IMR-90 (cell line): ENCODE measurements at regions of chr12 and their contacts with region 1.

Region 1: DNA sequence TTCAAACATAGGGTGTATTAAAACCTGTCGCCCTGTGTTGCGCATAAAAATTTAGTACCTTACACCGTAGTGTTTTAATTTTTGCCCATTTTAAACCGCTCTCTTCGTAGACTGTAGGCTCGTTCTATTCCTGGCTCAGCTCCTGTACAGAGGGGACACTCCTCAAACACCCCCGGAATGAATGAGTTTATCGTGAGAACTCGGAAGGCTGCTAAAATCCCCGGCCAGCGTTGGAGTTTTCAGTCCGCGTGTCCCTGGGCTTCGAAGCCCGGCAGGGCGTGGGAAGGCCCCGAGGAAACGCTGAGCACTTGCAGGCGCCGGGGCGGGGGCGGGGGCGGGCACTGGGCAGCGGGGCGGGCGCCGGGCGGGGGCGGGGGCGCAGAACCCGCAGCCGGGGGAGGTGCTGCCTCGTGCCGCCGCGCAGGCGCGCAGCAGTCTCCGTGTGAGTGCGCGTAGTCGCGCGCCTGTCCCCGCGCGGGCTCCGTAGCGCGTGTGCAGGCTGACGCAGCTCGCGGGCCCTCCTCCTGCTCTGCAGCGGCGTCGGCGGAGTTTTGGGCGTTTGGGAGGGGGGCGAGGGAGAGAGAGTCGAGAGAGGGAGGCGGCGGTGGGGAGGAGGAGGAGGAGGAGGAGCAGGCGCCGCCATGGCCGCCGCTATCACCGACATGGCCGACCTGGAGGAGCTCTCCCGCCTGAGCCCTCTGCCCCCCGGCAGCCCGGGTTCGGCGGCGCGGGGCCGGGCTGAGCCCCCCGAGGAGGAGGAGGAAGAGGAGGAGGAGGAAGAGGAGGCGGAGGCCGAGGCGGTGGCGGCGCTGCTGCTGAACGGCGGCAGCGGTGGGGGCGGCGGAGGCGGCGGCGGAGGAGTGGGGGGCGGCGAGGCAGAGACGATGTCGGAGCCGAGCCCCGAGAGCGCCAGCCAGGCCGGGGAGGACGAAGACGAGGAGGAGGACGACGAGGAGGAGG is at the start of gene AEBP2:
- DNase-seq: peak; percentile 95
- ATAC-seq: peak; percentile 95
- H3K4me3 ChIP-seq: peak within 1 kb of the TSS; percentile 100
- H3K27ac ChIP-seq: peak within 1 kb of the TSS; percentile 97
- H3K4me1 ChIP-seq: no peaks in the 10 kb centered on the region
- H3K27me3 ChIP-seq: no peaks in the 10 kb centered on the region
- CTCF ChIP-seq: no peak
- POLR2A ChIP-seq: peak; percentile 78
- RAD21 ChIP-seq: no peak
- total RNA-seq, gene AEBP2: 21.7 and 23.6 TPM in 2 replicates

Region 2: DNA sequence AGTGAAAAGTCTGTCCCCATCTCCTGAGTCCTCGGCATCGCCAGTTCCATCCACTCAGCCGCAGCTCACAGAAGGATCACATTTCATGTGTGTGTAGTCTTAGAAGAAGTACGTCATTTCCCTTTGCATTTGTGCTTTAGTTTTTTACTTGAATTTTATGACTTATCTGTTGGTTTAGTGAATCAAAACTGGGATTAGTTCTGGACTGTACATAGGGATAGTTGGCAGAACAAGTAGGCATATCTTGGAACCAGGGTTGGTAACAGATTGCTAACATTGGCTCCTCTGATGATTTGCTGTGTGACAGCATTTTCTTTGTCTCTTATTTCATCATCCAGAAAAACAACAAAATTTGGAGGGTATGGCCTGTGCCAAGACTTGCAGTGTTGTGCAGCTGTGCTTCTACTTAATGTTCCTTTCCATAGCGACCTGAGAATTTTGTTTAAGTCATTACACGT is 69.6 kb before region 1 on chr12:
- CTCF ChIA-PET with region 1: no interaction called
- POLR2A ChIA-PET with region 1: no interaction called
- dilution Hi-C with region 1: no loop called
- in situ Hi-C with region 1: loop called (anchors 10 kb)
- intact Hi-C with region 1: no loop called
- DNase-seq: peak; percentile 84
- ATAC-seq: peak; percentile 72
- H3K4me3 ChIP-seq: no peak overlapping the region
- H3K27ac ChIP-seq: peak overlapping the region; percentile 2; the same call in 1 of the 2 replicates
- H3K4me1 ChIP-seq: peaks cover 2% of the 10 kb centered on the region; the same call in 1 of the 2 replicates
- H3K27me3 ChIP-seq: no peaks in the 10 kb centered on the region
- CTCF ChIP-seq: no peak
- POLR2A ChIP-seq: peak; percentile 41; the same call in 1 of the 2 replicates
- RAD21 ChIP-seq: no peak

Region 3: DNA sequence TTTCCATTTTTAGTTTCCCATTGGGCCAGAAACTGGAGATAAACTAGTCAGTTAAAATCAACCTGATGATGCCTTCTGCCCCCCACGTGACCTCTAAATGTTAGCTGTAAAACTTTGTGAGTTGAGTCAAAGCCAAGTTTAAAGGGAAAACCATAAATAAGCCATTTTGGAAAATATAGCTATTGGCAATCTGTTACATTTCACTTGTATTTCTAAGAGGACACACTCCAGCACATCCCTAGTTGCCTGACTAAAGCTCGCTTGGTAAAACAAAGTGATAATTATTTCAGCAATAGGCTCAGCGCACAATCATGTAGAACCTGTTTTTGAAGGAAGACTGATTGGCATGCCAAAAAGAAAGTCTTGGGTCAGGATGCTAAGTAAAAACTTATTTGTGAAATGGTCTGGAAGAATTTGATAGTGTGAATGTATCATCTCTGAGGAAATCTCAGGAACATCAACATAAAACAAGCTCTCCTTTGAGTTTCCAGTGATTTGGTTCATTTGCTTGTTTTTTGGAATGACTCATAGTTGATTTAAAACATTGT is 49.2 kb before region 1 on chr12:
- CTCF ChIA-PET with region 1: no interaction called
- POLR2A ChIA-PET with region 1: no interaction called
- dilution Hi-C with region 1: no loop called
- in situ Hi-C with region 1: no loop called
- intact Hi-C with region 1: loop called (anchors 5 kb)
- DNase-seq: peak; percentile 46
- ATAC-seq: peak; percentile 50
- H3K4me3 ChIP-seq: no peak overlapping the region
- H3K27ac ChIP-seq: no peak overlapping the region
- H3K4me1 ChIP-seq: no peaks in the 10 kb centered on the region; the same call in 1 of the 2 replicates
- H3K27me3 ChIP-seq: no peaks in the 10 kb centered on the region
- CTCF ChIP-seq: no peak
- POLR2A ChIP-seq: no peak
- RAD21 ChIP-seq: no peak